Mucosa of descending colon (tissue), 3 donors: ENCODE measurements at regions of chr12 and their contacts with region 1.

Region 1: DNA sequence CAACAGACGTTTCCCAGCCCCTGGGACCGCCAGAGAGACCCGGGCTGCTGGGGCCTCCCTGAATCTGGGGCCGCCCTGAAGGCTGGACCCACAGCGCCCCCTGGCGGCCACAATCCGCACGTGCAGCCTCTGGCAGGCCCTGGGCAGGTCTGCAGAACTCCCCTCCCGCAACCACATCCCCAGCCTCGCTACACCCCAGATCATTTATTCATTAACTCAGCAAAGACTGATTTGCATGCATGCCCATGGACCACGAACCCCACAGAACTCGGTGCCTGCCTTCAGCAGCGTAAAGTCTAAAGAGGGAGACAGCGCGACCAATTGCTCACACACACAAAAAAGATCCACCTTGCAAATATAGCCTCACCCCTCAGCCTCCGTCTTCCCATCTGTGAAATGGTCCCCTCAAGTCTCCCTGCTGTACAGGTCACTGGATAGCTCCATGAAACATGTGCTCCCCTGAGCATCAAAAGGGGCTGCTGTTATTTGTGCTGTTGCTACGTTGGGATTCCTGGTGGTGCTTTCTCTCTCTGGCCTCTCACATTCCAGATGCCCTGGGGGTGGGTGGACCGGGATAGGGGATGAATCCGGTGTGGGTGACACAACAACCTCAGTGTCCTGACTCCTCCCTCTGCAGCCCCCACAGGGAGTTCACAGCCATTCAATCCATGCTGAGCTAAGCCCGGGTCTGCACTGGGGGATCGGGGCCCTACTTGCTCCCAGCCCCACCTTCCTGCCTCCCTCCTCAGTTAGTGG is 96.4 kb downstream of the SCARB1 start:
- DNase-seq: peak; percentile 84 to 88 (median 86)
- ATAC-seq: peak; percentile 88
- H3K4me3 ChIP-seq: no peak overlapping the region
- H3K4me1 ChIP-seq: peaks cover 11% of the 10 kb centered on the region
- CTCF ChIP-seq: peak; percentile 98

Region 2: GRCh38 chr12:124036674-124037109 is 730.6 kb before region 1 on chr12:
- intact Hi-C with region 1: loop called in 1 of 2 experiments (anchors 5 kb)
- DNase-seq: peak in 2 of 3 donors; percentile 44 to 60
- ATAC-seq: peak; percentile 67
- H3K4me3 ChIP-seq: no peak overlapping the region
- H3K4me1 ChIP-seq: no peaks in the 10 kb centered on the region
- CTCF ChIP-seq: peak; percentile 82

Region 3: GRCh38 chr12:124311292-124312109 is 455.7 kb before region 1 on chr12:
- intact Hi-C with region 1: no loop called
- DNase-seq: peak; percentile 49 to 65 (median 53)
- ATAC-seq: peak; percentile 55
- H3K4me3 ChIP-seq: no peak overlapping the region
- H3K4me1 ChIP-seq: no peaks in the 10 kb centered on the region
- CTCF ChIP-seq: no peak

Region 4: DNA sequence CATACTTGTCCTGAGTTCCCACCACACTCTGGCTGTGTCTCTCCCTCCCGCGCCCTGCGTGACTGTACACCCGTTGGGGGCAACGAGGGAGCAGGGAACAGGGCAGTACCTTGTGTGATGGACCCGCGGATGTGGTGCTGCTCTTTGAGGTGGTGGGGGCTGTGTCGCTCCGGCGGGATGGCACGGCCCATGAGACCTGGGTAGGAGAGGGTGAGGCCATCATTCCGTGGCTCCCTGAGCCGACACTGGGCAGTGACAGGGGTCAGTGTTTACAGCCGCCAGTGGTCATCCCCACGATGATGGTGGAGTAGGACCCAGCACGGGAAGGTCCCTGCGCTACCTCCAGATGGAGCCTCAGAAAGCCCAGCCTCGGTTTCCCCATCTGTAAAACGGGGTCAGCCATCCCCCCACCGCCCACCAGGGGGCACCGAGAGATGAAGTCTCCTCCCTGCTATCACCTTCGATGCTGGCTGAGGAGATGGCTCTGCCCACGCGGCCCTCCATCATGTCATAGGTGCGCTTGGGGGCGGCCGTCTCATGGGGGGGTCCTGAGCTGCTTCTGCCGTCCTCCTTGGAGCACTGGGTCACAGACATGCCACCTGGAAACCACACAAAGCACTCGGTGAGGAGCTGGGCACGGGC is 419.4 kb before region 1 on chr12:
- intact Hi-C with region 1: loop called in 1 of 2 experiments (anchors 10 kb)
- DNase-seq: peak in 1 of 3 donors; percentile 48
- ATAC-seq: no peak
- H3K4me3 ChIP-seq: no peak overlapping the region
- H3K4me1 ChIP-seq: peaks cover 5% of the 10 kb centered on the region
- CTCF ChIP-seq: peak; percentile 16

Region 5: DNA sequence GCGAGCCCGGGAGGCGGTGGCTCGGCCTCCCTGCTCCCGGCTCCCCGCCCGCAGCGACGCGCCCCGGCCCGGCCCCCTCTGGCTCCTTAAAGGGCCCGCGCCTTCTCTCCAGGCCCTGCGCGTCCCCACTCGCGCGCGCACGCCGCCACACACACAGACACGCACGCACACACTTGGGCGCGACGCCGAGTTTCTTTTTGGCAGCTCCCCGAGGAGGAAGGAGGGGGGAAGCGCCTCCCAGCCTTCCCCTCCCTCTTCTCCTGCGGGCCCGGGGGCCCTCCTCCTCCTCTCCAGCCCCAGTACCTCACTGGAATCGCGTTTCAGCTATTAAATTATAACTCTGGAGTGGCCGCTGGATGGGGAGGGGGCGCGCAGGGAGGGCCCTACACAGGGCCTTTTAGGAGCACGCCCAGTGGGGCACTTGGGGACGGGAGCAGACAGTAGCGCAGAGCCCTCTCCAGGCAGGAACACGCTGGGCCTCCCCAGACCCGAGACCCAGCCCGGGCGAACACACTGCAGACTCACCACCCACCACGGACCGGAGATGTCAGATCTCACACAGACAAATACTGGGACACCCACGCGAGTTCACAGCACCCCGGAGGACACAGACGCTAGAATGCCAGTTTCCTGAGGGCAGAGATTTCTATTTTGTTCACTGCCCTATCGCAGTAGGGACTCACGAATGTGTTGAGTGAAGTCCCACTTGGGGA is 199.4 kb before region 1 on chr12:
- intact Hi-C with region 1: loop called (anchors 10 kb)
- DNase-seq: peak; percentile 92 to 95 (median 94)
- ATAC-seq: peak; percentile 89
- H3K4me3 ChIP-seq: no peak overlapping the region
- H3K4me1 ChIP-seq: peaks cover 23% of the 10 kb centered on the region
- CTCF ChIP-seq: no peak